Heart left ventricle (tissue), 16 donors: ENCODE measurements at regions of chr5 and their contacts with region 1.

Region 1: GRCh38 chr5:142600611-142601358 is 85.1 kb downstream of the FGF1 start:
- DNase-seq: peak; percentile 63 to 78 (median 71)
- ATAC-seq: peak; percentile 83 to 92 (median 86)
- H3K4me3 ChIP-seq: peak overlapping the region in 10 of 12 donors; percentile 3 to 41 (median 29)
- H3K27ac ChIP-seq: peak overlapping the region; percentile 42 to 87 (median 63)
- H3K4me1 ChIP-seq: peaks cover 0 to 51% (median 24%) of the 10 kb centered on the region in 12 donors
- H3K27me3 ChIP-seq: peaks cover 0 to 3% (median 0%) of the 10 kb centered on the region in 9 donors
- CTCF ChIP-seq: no peak
- POLR2A ChIP-seq: no peak

Region 2: DNA sequence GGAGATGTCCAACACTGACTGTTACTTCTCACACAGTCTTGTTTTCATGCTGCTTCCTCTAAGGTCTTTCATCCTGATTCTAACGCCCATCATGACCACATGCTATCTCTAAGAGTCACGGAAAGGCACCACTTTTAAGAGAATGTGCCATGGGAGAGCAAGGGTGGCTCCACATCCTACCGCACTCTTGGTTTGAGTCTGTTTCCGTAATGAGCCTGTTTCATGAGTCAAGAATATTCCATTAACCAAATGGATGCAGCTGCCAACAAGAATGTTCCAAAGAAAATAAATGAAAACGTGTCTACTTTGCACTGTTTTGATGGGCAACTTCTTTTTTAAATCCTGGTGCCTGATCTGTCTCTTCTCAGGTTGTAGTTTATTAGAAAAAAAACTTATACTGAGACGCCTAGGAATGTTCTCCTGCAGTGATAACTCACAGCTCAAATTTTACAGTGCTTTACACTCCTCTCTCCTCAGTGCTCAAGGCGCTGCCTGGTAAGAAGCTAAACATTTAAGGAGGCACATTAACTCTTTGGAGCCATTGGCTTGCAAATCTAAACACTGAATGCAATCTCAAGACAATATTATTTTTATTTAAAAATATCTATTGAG is 39.2 kb before region 1 on chr5:
- intact Hi-C with region 1: loop called in 1 of 10 experiments (anchors 5 kb)
- DNase-seq: no peak
- ATAC-seq: peak in 3 of 4 donors; percentile 46 to 62 (median 56)
- H3K4me3 ChIP-seq: no peak overlapping the region
- H3K27ac ChIP-seq: no peak overlapping the region
- H3K4me1 ChIP-seq: peaks cover 0 to 2% (median 0%) of the 10 kb centered on the region in 12 donors
- H3K27me3 ChIP-seq: no peaks in the 10 kb centered on the region
- CTCF ChIP-seq: no peak
- POLR2A ChIP-seq: no peak